ENCODE measurements at regions of chr7 and their contacts with region 1.

Region 1: DNA sequence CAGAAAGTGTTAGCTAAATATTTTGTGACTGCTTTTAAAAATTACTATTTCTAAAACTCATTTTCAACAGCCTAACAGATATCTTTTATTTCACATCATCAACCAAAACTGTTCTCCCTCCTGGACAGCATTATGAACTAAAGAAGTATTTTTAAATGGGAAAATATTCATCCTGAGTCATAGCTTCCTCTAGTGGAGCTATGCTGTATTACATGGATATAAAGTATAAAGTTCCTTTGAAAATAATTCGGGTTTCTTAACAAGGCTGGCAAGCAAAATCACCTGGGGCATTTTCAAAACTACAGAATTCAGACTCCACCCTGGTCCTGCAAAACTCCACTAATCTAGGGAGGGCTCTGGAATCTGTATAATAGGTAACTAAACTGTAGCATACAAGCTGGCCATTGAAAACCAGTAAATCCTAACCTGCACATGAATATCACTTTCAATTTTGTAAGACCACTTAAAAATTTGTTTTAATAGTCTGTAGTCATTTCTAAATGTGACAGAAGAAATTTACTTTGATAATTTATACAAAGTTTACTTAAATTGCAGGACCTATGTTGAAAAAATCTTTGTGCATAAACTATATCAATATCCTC is 53.5 kb downstream of the SCIN start:
- DNase-seq: peak; percentile 74
- ATAC-seq: peak; percentile 45
- H3K4me3 ChIP-seq: peak overlapping the region; percentile 39; the same call in 1 of the 2 replicates
- H3K27ac ChIP-seq: no peak overlapping the region
- H3K4me1 ChIP-seq: peaks cover 6% of the 10 kb centered on the region; the same call in 1 of the 2 replicates
- H3K27me3 ChIP-seq: no peaks in the 10 kb centered on the region
- CTCF ChIP-seq: peak; percentile 88

Region 2: DNA sequence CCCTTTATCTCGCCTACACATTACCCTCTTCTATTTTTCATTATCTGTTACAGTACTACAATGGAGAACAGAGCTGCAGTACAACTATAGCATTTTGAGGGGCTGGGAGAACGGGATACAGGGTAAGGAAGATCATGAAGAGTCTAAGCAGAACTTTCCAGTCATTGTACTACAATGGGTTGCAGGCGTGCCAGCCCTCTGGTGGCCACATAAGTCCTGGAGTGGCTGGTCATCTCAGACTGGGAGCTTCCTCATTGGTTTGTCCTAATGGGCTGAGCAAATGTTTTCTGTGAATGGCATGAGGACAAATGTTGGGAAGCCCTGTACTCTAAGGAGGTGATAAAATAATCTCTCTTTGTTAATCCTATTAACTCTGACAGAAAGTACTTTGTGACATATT is 379.9 kb before region 1 on chr7:
- CTCF ChIA-PET with region 1: no interaction called
- POLR2A ChIA-PET with region 1: no interaction called
- intact Hi-C with region 1: no loop called
- DNase-seq: peak; percentile 59
- ATAC-seq: peak; percentile 83
- H3K4me3 ChIP-seq: no peak overlapping the region
- H3K27ac ChIP-seq: no peak overlapping the region
- H3K4me1 ChIP-seq: peaks cover 11% of the 10 kb centered on the region
- H3K27me3 ChIP-seq: no peaks in the 10 kb centered on the region
- CTCF ChIP-seq: peak; percentile 74

Region 3: GRCh38 chr7:12458520-12459131 is 165.4 kb before region 1 on chr7:
- CTCF ChIA-PET with region 1: interaction called, 4 read pairs
- POLR2A ChIA-PET with region 1: no interaction called
- intact Hi-C with region 1: loop called (anchors 2 kb)
- DNase-seq: peak; percentile 77
- ATAC-seq: peak; percentile 100
- H3K4me3 ChIP-seq: no peak overlapping the region
- H3K27ac ChIP-seq: no peak overlapping the region
- H3K4me1 ChIP-seq: no peaks in the 10 kb centered on the region
- H3K27me3 ChIP-seq: no peaks in the 10 kb centered on the region
- CTCF ChIP-seq: peak; percentile 88

Region 4: GRCh38 chr7:12524794-12525386 is 99.1 kb before region 1 on chr7:
- CTCF ChIA-PET with region 1: interaction called, 9 read pairs
- POLR2A ChIA-PET with region 1: no interaction called
- intact Hi-C with region 1: loop called (anchors 1 kb)
- DNase-seq: peak; percentile 80
- ATAC-seq: peak; percentile 51; the same call in 1 of the 2 replicates
- H3K4me3 ChIP-seq: no peak overlapping the region
- H3K27ac ChIP-seq: no peak overlapping the region
- H3K4me1 ChIP-seq: no peaks in the 10 kb centered on the region
- H3K27me3 ChIP-seq: no peaks in the 10 kb centered on the region
- CTCF ChIP-seq: peak; percentile 64

Region 5: GRCh38 chr7:12540850-12541249 is 83.1 kb before region 1 on chr7:
- CTCF ChIA-PET with region 1: no interaction called
- POLR2A ChIA-PET with region 1: no interaction called
- intact Hi-C with region 1: loop called (anchors 5 kb)
- DNase-seq: no peak
- ATAC-seq: no peak
- H3K4me3 ChIP-seq: no peak overlapping the region
- H3K27ac ChIP-seq: no peak overlapping the region
- H3K4me1 ChIP-seq: peaks cover 14% of the 10 kb centered on the region
- H3K27me3 ChIP-seq: no peaks in the 10 kb centered on the region
- CTCF ChIP-seq: no peak

Region 6: GRCh38 chr7:12570534-12571461 is 53.2 kb before region 1 on chr7 and contains the start of gene SCIN:
- CTCF ChIA-PET with region 1: interaction called, 4 read pairs
- POLR2A ChIA-PET with region 1: no interaction called
- intact Hi-C with region 1: loop called (anchors 1 kb)
- DNase-seq: peak; percentile 47
- ATAC-seq: peak; percentile 65
- H3K4me3 ChIP-seq: peak within 1 kb of the TSS; percentile 71
- H3K27ac ChIP-seq: peak within 1 kb of the TSS; percentile 44
- H3K4me1 ChIP-seq: peaks cover 37% of the 10 kb centered on the region
- H3K27me3 ChIP-seq: no peaks in the 10 kb centered on the region
- CTCF ChIP-seq: no peak
- total RNA-seq, gene SCIN: 0.91 and 1.6 TPM in 2 replicates